Right cardiac atrium (tissue), 5 donors: ENCODE measurements at regions of chr17 and their contacts with region 1.

Region 1: DNA sequence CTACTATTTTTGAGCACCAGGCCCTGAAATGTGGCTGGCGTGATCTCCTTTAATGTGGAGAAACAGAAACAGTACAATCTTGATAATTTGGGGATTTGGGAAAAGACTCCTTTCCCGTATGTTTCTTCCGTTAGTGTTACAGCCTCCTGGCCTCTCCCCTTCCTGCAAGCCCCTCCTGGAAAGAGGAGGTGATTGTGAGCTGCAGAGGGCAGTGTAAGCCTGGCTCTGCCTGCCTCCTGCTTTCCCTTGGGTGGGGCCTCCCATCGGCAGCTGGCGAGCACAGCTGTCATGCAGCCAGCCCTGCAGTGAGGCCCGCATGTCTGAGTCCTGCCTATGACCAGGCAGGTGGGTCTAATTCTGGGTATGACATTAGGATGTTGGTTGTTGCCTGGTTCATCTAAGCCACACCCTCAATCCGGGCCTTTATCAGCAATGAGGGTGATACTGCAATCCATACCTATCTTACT is 48.7 kb upstream of the WSB1 start:
- DNase-seq: peak; percentile 90 to 95 (median 93)
- ATAC-seq: peak; percentile 94
- H3K4me3 ChIP-seq: no peak overlapping the region
- H3K27ac ChIP-seq: peak overlapping the region; percentile 19
- H3K4me1 ChIP-seq: peaks cover 13% of the 10 kb centered on the region
- H3K27me3 ChIP-seq: no peaks in the 10 kb centered on the region

Region 2: GRCh38 chr17:27106347-27106981 is 138.8 kb before region 1 on chr17:
- intact Hi-C with region 1: no loop called
- DNase-seq: no peak
- ATAC-seq: no peak
- H3K4me3 ChIP-seq: no peak overlapping the region
- H3K27ac ChIP-seq: no peak overlapping the region
- H3K4me1 ChIP-seq: no peaks in the 10 kb centered on the region
- H3K27me3 ChIP-seq: no peaks in the 10 kb centered on the region

Region 3: DNA sequence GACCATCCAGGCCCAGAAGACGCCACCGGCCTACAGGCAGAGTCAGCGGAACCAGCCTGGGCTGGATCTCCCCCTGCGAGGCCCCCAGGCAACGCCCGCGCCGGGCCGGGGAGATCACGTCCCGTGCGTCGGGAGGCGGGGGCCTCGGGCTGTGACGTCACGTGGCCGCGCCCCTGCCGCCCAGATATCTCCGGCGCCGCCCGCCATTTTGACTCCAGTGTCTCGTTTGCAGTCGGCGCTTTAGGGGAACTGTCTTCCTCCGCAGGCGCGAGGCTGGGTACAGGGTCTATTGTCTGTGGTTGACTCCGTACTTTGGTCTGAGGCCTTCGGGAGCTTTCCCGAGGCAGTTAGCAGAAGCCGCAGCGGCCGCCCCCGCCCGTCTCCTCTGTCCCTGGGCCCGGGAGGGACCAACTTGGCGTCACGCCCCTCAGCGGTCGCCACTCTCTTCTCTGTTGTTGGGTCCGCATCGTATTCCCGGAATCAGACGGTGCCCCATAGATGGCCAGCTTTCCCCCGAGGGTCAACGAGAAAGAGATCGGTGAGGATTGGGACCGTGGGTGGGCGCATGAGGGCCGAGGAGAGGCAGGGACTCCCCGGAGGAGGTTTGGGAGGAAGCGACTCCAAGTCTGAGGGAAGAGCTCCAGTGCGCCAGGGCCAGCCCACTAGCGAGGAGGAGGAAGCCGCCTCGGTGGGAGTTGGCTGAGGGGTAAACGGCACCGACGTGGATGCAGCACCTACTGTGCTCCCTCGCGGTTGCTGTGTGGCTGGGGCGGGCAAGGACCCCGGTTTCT is 48.8 kb after region 1 on chr17 and contains the start of gene WSB1:
- intact Hi-C with region 1: loop called (anchors 2 to 10 kb)
- DNase-seq: peak; percentile 95 to 98 (median 98)
- ATAC-seq: peak; percentile 97
- H3K4me3 ChIP-seq: peak within 1 kb of the TSS; percentile 64
- H3K27ac ChIP-seq: peak within 1 kb of the TSS; percentile 96
- H3K4me1 ChIP-seq: peaks cover 10% of the 10 kb centered on the region
- H3K27me3 ChIP-seq: no peaks in the 10 kb centered on the region
- total RNA-seq, gene WSB1: 74.6 to 130 (median 91.7) TPM

Region 4: GRCh38 chr17:27323524-27324206 is 78.4 kb after region 1 on chr17:
- intact Hi-C with region 1: loop called in 1 of 4 experiments (anchors 10 kb)
- DNase-seq: peak; percentile 88 to 94 (median 92)
- ATAC-seq: peak; percentile 87 to 92
- H3K4me3 ChIP-seq: no peak overlapping the region
- H3K27ac ChIP-seq: peak overlapping the region; percentile 59
- H3K4me1 ChIP-seq: peaks cover 19% of the 10 kb centered on the region
- H3K27me3 ChIP-seq: no peaks in the 10 kb centered on the region

Region 5: GRCh38 chr17:27332485-27333409 is 87.5 kb after region 1 on chr17:
- intact Hi-C with region 1: loop called in 3 of 4 experiments (anchors 5 to 10 kb)
- DNase-seq: peak; percentile 99 to 100 (median 99)
- ATAC-seq: peak; percentile 97
- H3K4me3 ChIP-seq: peak overlapping the region; percentile 56
- H3K27ac ChIP-seq: peak overlapping the region; percentile 99
- H3K4me1 ChIP-seq: peaks cover 2% of the 10 kb centered on the region
- H3K27me3 ChIP-seq: no peaks in the 10 kb centered on the region

Region 6: GRCh38 chr17:27353461-27354050 is 108.3 kb after region 1 on chr17:
- intact Hi-C with region 1: loop called in 1 of 4 experiments (anchors 5 kb)
- DNase-seq: peak; percentile 95 to 97 (median 96)
- ATAC-seq: peak; percentile 94 to 95
- H3K4me3 ChIP-seq: peak overlapping the region; percentile 49
- H3K27ac ChIP-seq: peak overlapping the region; percentile 69
- H3K4me1 ChIP-seq: peaks cover 6% of the 10 kb centered on the region
- H3K27me3 ChIP-seq: no peaks in the 10 kb centered on the region

Region 7: DNA sequence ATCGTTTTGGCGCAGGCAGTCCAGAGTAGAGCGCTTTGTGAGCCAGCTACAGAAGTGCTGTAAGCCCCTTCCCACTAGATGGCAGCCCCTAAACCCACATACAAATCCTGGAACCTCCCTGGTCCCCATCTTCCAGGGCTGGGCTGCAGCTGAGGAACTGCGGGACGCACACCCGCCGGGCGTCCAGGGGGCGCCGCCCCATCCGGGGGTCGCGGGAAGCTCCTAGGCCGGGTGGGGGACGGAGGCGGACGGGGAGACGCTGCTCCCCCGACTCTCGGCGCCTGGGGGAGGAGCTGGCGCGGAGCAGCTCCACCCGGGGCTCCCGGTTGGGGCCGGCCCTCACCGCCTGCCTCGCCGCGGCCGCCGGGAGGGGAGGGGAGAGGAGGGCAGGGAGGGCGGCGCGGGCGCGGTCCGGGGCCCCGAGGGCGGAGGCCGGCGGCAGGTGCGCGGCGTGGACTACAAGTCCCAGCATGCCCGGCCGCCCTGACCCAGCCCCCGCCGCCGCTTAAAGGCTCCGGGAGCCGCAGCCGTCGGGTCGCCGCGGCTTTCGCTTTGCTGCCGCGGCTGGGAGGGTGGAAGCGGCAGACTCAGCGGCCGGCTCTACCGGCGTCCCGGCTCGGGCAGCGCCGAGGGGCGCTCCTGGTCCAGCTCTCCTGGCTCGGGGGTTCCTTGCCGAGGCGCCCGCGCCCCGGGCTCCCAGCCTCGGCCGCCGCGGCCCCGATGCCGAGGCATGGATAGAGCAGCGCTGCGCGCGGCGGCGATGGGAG is 210.8 kb after region 1 on chr17 and contains the start of gene KSR1:
- intact Hi-C with region 1: loop called in 1 of 4 experiments (anchors 10 kb)
- DNase-seq: peak; percentile 82 to 93 (median 90)
- ATAC-seq: peak; percentile 94
- H3K4me3 ChIP-seq: peak within 1 kb of the TSS; percentile 92
- H3K27ac ChIP-seq: peak within 1 kb of the TSS; percentile 55
- H3K4me1 ChIP-seq: peaks cover 5% of the 10 kb centered on the region
- H3K27me3 ChIP-seq: no peaks in the 10 kb centered on the region
- total RNA-seq, gene KSR1: 13.1 to 22.7 (median 14.1) TPM

Region 8: DNA sequence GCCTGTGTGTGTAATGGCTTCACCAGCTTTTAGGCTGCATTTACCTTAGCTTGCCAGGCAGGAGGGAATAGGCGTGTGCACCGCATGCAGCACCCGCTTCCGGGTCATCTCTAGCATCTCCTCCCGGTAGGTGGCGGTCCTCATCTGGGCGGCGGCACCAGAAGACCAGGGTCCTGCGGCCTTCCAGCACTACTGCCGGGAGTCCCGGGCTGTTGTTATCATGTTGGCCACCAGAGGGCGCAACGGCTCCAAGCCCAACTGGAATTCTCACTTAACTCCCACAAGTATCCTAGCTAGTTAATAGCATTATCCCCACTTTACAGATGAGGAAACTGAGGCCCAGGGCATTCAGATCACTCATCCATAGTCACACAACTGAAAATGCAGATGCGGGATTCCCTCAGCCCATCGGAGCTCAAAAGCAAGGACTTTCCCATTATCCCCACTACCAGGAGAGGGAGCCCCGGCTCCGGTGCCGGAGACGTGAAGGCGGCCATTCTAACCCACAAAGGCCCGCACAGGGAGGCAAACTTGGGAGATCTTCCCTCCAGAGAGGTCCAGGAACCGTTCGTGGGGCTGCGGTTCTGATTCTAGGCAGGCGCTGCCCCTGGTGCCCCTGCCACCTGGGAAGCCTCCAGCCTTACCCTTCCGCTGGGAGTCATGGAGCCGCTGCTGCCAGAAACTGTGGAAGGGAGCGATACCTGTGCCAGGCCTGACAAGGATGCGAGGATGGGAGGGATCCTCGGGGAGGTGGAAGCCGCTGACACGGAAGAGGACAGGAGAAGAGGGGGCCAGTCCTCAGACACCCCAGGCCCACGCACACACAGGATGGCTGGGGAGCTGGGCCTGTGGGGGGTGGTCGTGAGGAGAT is 409.6 kb after region 1 on chr17:
- intact Hi-C with region 1: loop called in 1 of 4 experiments (anchors 5 kb)
- DNase-seq: peak; percentile 63 to 84 (median 83)
- ATAC-seq: peak in 1 of 2 donors; percentile 22
- H3K4me3 ChIP-seq: no peak overlapping the region
- H3K27ac ChIP-seq: no peak overlapping the region
- H3K4me1 ChIP-seq: no peaks in the 10 kb centered on the region
- H3K27me3 ChIP-seq: no peaks in the 10 kb centered on the region